ENCODE measurements at regions of chr11 and their contacts with region 1.

Region 1: DNA sequence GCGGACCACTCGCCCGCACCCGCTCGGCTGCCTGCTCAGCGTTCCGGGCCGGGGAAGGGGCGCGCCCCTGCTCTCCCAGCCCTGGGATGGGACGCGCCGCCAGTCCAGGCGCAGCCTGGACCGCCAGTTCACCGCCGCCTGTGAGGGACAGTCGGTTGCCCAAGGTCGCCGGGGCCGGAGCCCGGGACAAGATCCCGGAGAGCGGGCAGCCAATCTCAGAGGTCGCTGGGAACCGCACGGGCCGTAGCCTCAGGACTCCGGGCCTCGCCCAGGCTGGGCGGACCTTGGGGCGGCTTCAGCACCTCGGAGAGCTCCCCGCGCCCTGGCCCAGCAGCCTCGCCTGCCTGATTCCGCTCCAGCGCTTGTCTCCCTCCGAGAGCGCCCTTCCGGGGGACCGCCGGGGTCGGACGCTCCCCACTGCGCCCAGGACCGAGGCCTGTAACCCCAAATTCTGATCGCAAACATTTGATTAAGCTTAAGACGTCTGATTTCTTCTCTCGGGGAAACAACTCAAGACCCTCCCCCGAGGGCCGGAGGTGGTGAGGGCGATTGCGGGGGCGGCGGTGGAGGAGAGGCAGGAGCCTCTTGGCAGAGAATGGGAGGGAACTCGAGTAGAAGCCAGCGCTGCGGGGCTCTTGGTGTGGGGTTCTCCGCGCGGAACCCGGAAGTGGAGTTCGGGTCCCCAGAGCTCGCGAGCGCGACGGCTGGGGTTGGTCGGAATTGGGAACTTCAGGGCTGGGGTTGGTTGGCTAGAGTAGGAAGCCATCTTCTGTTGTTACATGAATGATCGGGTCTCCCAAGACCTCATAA is 1.1 kb upstream of the CHRM4 start:
- DNase-seq: peak; percentile 88 to 94 (median 90)
- ATAC-seq: peak; percentile 89
- H3K4me3 ChIP-seq: peak overlapping the region; percentile 81
- H3K27ac ChIP-seq: no peak overlapping the region
- H3K4me1 ChIP-seq: peaks cover 19 to 56% of the 10 kb centered on the region in 2 experiments
- H3K27me3 ChIP-seq: peaks cover 0 to 11% of the 10 kb centered on the region in 2 experiments; a peak in 1 of 5 replicates
- CTCF ChIP-seq: 0 out of 6 replicates have a peak, but pooled peaks of 1 of the 3 experiments have one; percentile 5
- EP300 ChIP-seq: no peak
- POLR2A ChIP-seq: 0 out of 2 replicates have a peak, but pooled peaks have one; percentile 29
- RAD21 ChIP-seq: peak in 1 of 2 experiments; percentile 31; a peak in 2 of 4 replicates

Region 2: DNA sequence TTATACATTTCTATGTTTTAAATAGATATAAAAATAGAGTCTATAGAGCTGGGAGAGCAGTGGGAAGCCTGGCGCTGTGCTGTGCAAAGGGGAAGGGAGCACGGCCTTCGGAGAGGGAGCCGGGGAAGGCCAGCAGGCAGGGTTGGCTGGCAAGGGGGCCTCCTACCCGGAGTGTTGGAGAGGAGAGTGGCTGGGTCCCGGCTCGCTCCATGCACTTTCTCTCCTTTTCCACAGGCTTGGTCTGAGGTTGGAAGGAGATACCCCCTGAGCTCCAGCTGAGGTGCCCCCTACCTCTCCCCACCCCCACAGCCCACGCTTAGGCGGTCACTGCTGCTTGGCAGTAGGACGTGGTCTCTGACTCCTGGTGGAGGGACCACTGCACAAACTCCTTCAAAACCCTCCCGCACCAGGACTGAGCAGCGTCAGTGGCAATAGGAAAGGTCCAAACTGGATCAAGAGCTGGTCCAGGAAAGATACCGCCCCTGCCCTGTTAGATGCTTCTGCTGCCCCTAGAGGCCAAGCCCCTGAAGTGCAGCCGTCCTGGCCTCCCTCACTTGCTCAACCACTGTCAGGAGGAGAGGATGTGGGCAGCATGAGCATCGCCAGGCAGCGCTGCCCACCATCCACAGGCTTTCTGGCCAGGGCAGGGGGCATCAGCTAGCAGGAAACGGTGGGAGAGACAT is 1159.4 kb before region 1 on chr11:
- CTCF ChIA-PET with region 1: no interaction called
- POLR2A ChIA-PET with region 1: no interaction called
- in situ Hi-C with region 1: no loop called
- intact Hi-C with region 1: no loop called
- DNase-seq: peak; percentile 67 to 86 (median 83)
- ATAC-seq: peak; percentile 98
- H3K4me3 ChIP-seq: no peak overlapping the region
- H3K27ac ChIP-seq: no peak overlapping the region
- H3K4me1 ChIP-seq: peaks cover 0 to 5% of the 10 kb centered on the region in 2 experiments; a peak in 1 of 5 replicates
- H3K27me3 ChIP-seq: peaks cover 2 to 7% of the 10 kb centered on the region in 2 experiments; a peak in 4 of 5 replicates
- CTCF ChIP-seq: peak; percentile 67 to 86 (median 77)
- EP300 ChIP-seq: no peak
- POLR2A ChIP-seq: no peak
- RAD21 ChIP-seq: peak in 1 of 2 experiments; percentile 29; a peak in 1 of 4 replicates

Region 3: GRCh38 chr11:46380340-46381047 is 12.1 kb before region 1 on chr11:
- CTCF ChIA-PET with region 1: no interaction called
- POLR2A ChIA-PET with region 1: interaction called, 10 read pairs
- in situ Hi-C with region 1: no loop called
- intact Hi-C with region 1: no loop called
- DNase-seq: peak; percentile 86 to 90 (median 88)
- ATAC-seq: peak; percentile 62
- H3K4me3 ChIP-seq: peak overlapping the region; percentile 75
- H3K27ac ChIP-seq: peak overlapping the region; percentile 96
- H3K4me1 ChIP-seq: peaks cover 25 to 66% of the 10 kb centered on the region in 2 experiments
- H3K27me3 ChIP-seq: no peaks in the 10 kb centered on the region
- CTCF ChIP-seq: no peak
- EP300 ChIP-seq: no peak
- POLR2A ChIP-seq: peak; percentile 66
- RAD21 ChIP-seq: no peak

Region 4: DNA sequence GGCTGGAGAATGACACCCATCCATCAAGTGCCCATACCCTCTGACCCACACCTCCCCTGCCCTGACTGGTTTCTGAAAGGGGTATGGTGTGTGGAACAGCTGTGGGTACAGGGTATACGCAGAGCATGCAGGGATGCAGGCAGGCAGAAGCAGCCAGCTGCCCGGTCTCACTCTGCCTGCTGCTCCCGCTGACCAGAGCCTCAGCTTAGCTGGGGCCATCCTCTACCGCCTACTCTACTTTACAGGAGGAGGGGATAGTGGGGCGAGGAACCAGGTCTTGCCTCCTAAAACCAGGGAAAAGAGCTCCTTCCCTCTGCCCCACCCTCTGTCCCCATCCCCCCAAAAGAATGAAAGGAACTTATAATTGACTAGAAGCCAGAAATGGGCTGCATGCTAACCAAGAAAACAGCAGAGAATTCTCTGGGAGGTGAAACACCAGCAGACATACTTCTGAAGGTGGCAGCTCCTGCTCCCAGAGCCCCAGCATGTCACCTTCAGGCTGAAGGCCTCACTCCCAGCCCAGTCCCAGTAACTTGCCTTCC is 11.9 kb after region 1 on chr11:
- CTCF ChIA-PET with region 1: no interaction called
- POLR2A ChIA-PET with region 1: interaction called, 13 read pairs
- in situ Hi-C with region 1: no loop called
- intact Hi-C with region 1: no loop called
- DNase-seq: no peak
- ATAC-seq: no peak
- H3K4me3 ChIP-seq: no peak overlapping the region
- H3K27ac ChIP-seq: no peak overlapping the region
- H3K4me1 ChIP-seq: no peaks in the 10 kb centered on the region
- H3K27me3 ChIP-seq: no peaks in the 10 kb centered on the region
- CTCF ChIP-seq: no peak
- EP300 ChIP-seq: no peak
- POLR2A ChIP-seq: no peak
- RAD21 ChIP-seq: no peak

Region 5: DNA sequence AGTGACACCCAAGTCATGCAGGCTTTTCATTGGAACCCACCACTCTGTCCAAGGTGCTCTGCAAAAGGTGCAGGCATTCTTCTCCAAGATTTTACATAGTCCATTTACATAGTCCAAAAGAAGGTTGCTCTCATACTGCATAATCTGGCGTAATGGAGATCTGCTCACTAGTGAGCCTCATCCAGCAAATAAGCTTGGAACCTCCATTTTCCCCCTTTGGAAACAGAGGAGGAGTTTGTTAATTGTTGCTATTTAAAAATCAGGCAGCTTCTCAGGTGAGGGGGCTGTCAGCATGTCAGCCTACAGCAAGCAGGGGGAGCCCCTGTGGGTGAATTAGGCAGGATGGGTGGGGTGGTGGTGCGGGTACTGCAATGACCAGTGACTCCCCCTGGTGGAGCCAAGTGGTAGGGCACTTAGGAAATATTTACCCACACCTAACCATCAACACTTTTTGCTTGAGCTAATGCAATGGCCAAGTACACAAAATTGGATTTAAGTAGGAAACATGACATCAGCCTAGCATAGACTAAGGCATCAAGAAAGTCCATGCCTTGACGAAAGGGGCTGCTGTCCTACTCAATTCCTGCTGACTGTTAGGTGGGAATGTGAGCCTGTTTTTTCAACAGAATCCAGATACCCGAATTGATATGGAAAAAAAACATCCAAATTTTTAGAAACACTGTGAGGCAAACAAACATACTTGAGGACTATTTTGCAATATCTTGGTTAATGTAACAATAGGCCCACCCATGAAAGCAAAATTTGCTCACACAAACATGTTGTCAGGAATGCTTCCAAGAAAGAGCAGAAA is 136.7 kb after region 1 on chr11:
- CTCF ChIA-PET with region 1: interaction called, 3 read pairs
- POLR2A ChIA-PET with region 1: interaction called, 3 read pairs
- in situ Hi-C with region 1: no loop called
- intact Hi-C with region 1: loop called (anchors 2 kb)
- DNase-seq: peak; percentile 81 to 90 (median 89)
- ATAC-seq: peak; percentile 95
- H3K4me3 ChIP-seq: no peak overlapping the region
- H3K27ac ChIP-seq: no peak overlapping the region
- H3K4me1 ChIP-seq: peaks cover 3 to 8% of the 10 kb centered on the region in 2 experiments; a peak in 4 of 5 replicates
- H3K27me3 ChIP-seq: no peaks in the 10 kb centered on the region
- CTCF ChIP-seq: peak; percentile 96 to 98 (median 96)
- EP300 ChIP-seq: no peak
- POLR2A ChIP-seq: no peak
- RAD21 ChIP-seq: peak; percentile 66 to 77

Region 6: GRCh38 chr11:46616998-46617675 is 224.5 kb after region 1 on chr11 and contains the starts of genes ATG13 and HARBI1:
- CTCF ChIA-PET with region 1: interaction called, 3 read pairs
- POLR2A ChIA-PET with region 1: no interaction called
- in situ Hi-C with region 1: no loop called
- intact Hi-C with region 1: loop called (anchors 5 kb)
- DNase-seq: peak; percentile 89 to 92 (median 91)
- ATAC-seq: peak; percentile 92
- H3K4me3 ChIP-seq: peak within 1 kb of the TSS; percentile 99
- H3K27ac ChIP-seq: peak within 1 kb of the TSS; percentile 100
- H3K4me1 ChIP-seq: peaks cover 17 to 18% of the 10 kb centered on the region in 2 experiments; a peak in 4 of 5 replicates
- H3K27me3 ChIP-seq: no peaks in the 10 kb centered on the region
- CTCF ChIP-seq: no peak
- EP300 ChIP-seq: peak; percentile 99
- POLR2A ChIP-seq: 0 out of 2 replicates have a peak, but pooled peaks have one; percentile 71
- RAD21 ChIP-seq: no peak
- polyA plus RNA-seq, gene ATG13: 13.1 to 15.6 TPM
- polyA plus RNA-seq, gene HARBI1: 6.0 to 8.4 TPM